ENCODE measurements at regions of chr13 and their contacts with region 1.

Region 1: GRCh38 chr13:91072486-91072885 is 275.0 kb upstream of the MIR17HG start:
- DNase-seq: peak; percentile 65 to 69
- H3K4me3 ChIP-seq: no peak overlapping the region
- H3K4me3 Mint-ChIP-seq: peak overlapping the region; percentile 24
- H3K27ac Mint-ChIP-seq: peak overlapping the region; percentile 85
- H3K4me1 ChIP-seq: peaks cover 50% of the 10 kb centered on the region
- H3K4me1 Mint-ChIP-seq: peaks cover 45% of the 10 kb centered on the region
- H3K27me3 ChIP-seq: no peaks in the 10 kb centered on the region
- H3K27me3 Mint-ChIP-seq: no peaks in the 10 kb centered on the region
- CTCF ChIP-seq: no peak

Region 2: DNA sequence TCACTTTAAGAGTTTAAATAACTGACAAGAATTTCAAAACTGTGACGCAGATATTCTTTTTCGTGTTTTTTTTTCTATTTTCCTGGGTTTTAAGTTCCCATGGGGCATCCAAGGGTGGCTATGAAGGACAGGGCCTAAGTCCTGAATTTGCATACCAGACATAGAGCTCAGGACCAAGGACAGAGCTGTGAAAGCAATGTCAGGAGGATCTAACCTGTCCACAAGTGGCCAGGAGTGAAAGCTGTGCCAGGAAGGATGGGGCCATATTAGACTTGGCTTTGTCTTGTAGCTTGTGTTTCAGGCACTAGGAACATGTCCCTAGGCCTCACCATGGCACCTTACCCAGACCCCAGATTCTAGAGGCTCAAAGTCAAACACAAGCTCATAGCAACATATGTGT is 14.4 kb before region 1 on chr13:
- CTCF ChIA-PET with region 1: no interaction called
- POLR2A ChIA-PET with region 1: no interaction called
- intact Hi-C with region 1: loop called (anchors 2 kb)
- DNase-seq: peak; percentile 41 to 48
- H3K4me3 ChIP-seq: no peak overlapping the region
- H3K4me3 Mint-ChIP-seq: no peak overlapping the region
- H3K27ac Mint-ChIP-seq: no peak overlapping the region
- H3K4me1 ChIP-seq: no peaks in the 10 kb centered on the region
- H3K4me1 Mint-ChIP-seq: no peaks in the 10 kb centered on the region
- H3K27me3 ChIP-seq: no peaks in the 10 kb centered on the region
- H3K27me3 Mint-ChIP-seq: peaks cover 2% of the 10 kb centered on the region
- CTCF ChIP-seq: no peak

Region 3: GRCh38 chr13:91111476-91112201 is 39.2 kb after region 1 on chr13:
- CTCF ChIA-PET with region 1: no interaction called
- POLR2A ChIA-PET with region 1: no interaction called
- intact Hi-C with region 1: loop called (anchors 5 kb)
- DNase-seq: no peak
- H3K4me3 ChIP-seq: no peak overlapping the region
- H3K4me3 Mint-ChIP-seq: peak overlapping the region; percentile 8
- H3K27ac Mint-ChIP-seq: no peak overlapping the region
- H3K4me1 ChIP-seq: peaks cover 14% of the 10 kb centered on the region
- H3K4me1 Mint-ChIP-seq: peaks cover 16% of the 10 kb centered on the region
- H3K27me3 ChIP-seq: no peaks in the 10 kb centered on the region
- H3K27me3 Mint-ChIP-seq: peaks cover 5% of the 10 kb centered on the region
- CTCF ChIP-seq: no peak

Region 4: DNA sequence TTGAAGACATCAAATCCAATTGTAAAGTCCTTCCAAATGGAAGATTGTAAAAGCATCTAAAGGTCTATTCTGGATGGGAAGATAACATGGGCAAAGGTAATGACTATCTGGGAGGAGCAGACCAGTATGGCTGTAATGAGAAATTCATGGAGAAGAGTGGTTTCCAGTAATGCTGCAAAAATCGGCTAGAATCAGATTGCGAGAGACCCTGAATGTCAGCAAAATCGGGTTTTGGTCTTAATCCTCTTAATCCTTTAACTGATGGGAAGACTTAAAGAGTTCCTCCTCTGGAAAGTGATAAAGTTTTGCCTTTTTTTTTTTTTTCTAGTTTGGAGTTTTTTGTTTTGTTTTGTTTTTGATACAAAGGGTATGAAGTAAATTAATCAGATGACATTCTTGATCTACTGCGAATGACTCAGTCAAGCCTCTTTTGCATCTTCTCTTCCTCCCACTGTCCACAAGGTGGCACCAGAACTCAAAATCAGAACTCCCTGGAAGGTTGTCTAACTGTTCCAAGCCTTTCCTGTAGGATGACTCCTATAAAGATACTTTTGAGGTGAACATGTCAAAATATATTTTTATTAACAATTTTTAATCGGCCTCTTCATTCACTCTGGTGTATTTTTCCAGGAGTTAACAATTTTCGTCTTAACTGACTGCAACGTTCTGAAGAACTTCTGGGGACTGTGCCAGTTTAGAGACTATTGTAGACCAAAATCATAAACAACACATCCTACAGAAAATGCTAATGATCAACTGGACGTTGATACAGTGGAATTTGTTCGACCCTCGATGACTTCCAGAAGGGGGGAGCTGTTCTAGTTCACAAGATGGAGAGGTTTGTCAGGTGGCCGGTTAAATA is 61.7 kb after region 1 on chr13:
- CTCF ChIA-PET with region 1: no interaction called
- POLR2A ChIA-PET with region 1: no interaction called
- intact Hi-C with region 1: no loop called
- DNase-seq: peak; percentile 69 to 72
- H3K4me3 ChIP-seq: no peak overlapping the region
- H3K4me3 Mint-ChIP-seq: no peak overlapping the region
- H3K27ac Mint-ChIP-seq: peak overlapping the region; percentile 21
- H3K4me1 ChIP-seq: peaks cover 34% of the 10 kb centered on the region
- H3K4me1 Mint-ChIP-seq: peaks cover 16% of the 10 kb centered on the region
- H3K27me3 ChIP-seq: no peaks in the 10 kb centered on the region
- H3K27me3 Mint-ChIP-seq: no peaks in the 10 kb centered on the region
- CTCF ChIP-seq: peak; percentile 90 to 94

Region 5: DNA sequence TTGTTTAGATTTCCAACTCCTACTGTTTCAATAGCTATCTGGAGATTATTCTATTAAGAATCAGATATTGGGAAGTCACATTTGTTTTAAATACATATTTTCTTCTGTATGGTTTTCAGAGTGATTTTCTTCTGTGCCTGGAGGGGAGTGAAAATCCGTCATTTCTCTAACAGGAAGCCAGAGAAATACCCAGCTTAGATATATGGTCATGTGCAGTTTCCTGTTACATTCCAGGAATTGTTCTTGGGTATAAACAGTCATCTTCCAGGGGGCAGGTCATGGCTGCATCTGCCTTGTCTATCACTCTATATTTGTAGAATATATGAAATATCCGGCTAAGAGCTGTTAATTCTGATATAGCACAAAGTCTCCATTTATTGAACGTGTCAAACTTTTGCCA is 197.5 kb after region 1 on chr13:
- CTCF ChIA-PET with region 1: no interaction called
- POLR2A ChIA-PET with region 1: no interaction called
- intact Hi-C with region 1: no loop called
- DNase-seq: no peak
- H3K4me3 ChIP-seq: no peak overlapping the region
- H3K4me3 Mint-ChIP-seq: no peak overlapping the region
- H3K27ac Mint-ChIP-seq: no peak overlapping the region
- H3K4me1 ChIP-seq: no peaks in the 10 kb centered on the region
- H3K4me1 Mint-ChIP-seq: no peaks in the 10 kb centered on the region
- H3K27me3 ChIP-seq: no peaks in the 10 kb centered on the region
- H3K27me3 Mint-ChIP-seq: no peaks in the 10 kb centered on the region
- CTCF ChIP-seq: no peak

Measured in Caco-2 (cell line).